ENCODE measurements at regions of chr16 and their contacts with region 1.

Region 1: GRCh38 chr16:77594799-77595596 is 127.3 kb upstream of the NUDT7 start:
- DNase-seq: no peak
- H3K4me3 ChIP-seq: no peak overlapping the region
- H3K27ac ChIP-seq: no peak overlapping the region
- H3K4me1 ChIP-seq: no peaks in the 10 kb centered on the region
- H3K27me3 ChIP-seq: no peaks in the 10 kb centered on the region
- CTCF ChIP-seq: no peak
- POLR2A ChIP-seq: no peak

Region 2: DNA sequence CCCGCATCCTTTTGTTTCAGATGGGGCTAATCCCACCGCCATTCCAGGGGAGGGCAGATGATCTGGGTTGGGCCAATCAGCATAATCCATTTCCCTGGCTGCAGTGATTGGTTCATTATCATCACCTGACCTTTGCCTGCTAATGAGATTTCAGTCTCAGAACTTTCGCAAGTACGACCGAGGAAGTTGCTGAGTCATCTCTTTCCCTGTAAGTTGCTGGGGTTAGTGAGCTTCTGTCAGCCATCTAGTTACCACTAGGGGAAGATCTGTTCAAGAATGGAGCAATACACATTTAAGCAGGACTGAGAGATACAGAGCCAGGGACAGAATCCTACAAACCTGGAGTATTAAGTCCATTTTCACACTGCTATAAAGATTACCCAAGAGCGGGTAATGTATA is 62.0 kb after region 1 on chr16:
- intact Hi-C with region 1: loop called (anchors 2 kb)
- DNase-seq: no peak
- H3K4me3 ChIP-seq: no peak overlapping the region
- H3K27ac ChIP-seq: no peak overlapping the region
- H3K4me1 ChIP-seq: no peaks in the 10 kb centered on the region
- H3K27me3 ChIP-seq: no peaks in the 10 kb centered on the region
- CTCF ChIP-seq: no peak
- POLR2A ChIP-seq: no peak

Measured in breast epithelium (tissue), 4 donors.